ENCODE measurements at regions of chr4 and their contacts with region 1.

Region 1: GRCh38 chr4:109548655-109549054 is 11.4 kb upstream of the MCUB start:
- DNase-seq: no peak
- ATAC-seq: peak; percentile 13 to 52 (median 28)
- H3K4me3 ChIP-seq: no peak overlapping the region
- H3K27ac ChIP-seq: peak overlapping the region; percentile 38
- H3K4me1 ChIP-seq: no peaks in the 10 kb centered on the region
- H3K27me3 ChIP-seq: no peaks in the 10 kb centered on the region
- CTCF ChIP-seq: no peak

Region 2: DNA sequence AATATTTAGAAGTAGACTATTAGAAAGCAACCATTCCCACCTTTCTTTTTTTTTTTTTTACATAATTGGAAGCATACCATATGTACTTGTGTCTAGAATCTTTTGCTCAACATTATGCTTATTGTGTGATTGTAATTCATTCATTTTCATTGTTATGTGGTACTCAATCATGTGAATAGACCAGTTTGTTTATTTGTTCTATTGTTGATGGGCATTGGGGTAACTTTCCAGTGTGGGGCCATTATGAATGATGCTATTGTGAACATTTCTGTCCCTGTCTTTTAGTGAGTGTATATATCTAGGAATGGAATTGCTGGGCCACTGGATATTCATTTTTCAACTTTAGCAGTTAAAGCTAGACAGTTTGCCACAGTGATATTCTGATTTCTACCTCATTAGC is 51.1 kb before region 1 on chr4:
- intact Hi-C with region 1: loop called in 1 of 2 experiments (anchors 5 kb)
- DNase-seq: no peak
- ATAC-seq: no peak
- H3K4me3 ChIP-seq: no peak overlapping the region
- H3K27ac ChIP-seq: no peak overlapping the region
- H3K4me1 ChIP-seq: no peaks in the 10 kb centered on the region
- H3K27me3 ChIP-seq: no peaks in the 10 kb centered on the region
- CTCF ChIP-seq: no peak